Activated naive CD4-positive, alpha-beta T cell treated with anti-CD3 and anti-CD28 coated beads for 36 hours (primary cell): ENCODE measurements at regions of chr10 and their contacts with region 1.

Region 1: GRCh38 chr10:97686962-97687784 is at the start of gene AVPI1:
- DNase-seq: peak; percentile 96
- H3K4me3 Mint-ChIP-seq: peak within 1 kb of the TSS; percentile 81
- H3K27ac Mint-ChIP-seq: no peak within 1 kb of the TSS
- H3K4me1 Mint-ChIP-seq: peaks cover 12% of the 10 kb centered on the region
- H3K27me3 Mint-ChIP-seq: no peaks in the 10 kb centered on the region
- total RNA-seq, gene AVPI1: 1.5 to 1.9 TPM

Region 2: GRCh38 chr10:97640174-97640867 is 46.9 kb before region 1 on chr10 and contains the start of gene PI4K2A:
- CTCF ChIA-PET with region 1: interaction called, 4 read pairs
- intact Hi-C with region 1: loop called (anchors 1 kb)
- DNase-seq: peak; percentile 100
- H3K4me3 Mint-ChIP-seq: peak within 1 kb of the TSS; percentile 93
- H3K27ac Mint-ChIP-seq: peak within 1 kb of the TSS; percentile 73
- H3K4me1 Mint-ChIP-seq: peaks cover 18% of the 10 kb centered on the region
- H3K27me3 Mint-ChIP-seq: no peaks in the 10 kb centered on the region
- total RNA-seq, gene PI4K2A: 8.9 to 9.4 TPM

Region 3: DNA sequence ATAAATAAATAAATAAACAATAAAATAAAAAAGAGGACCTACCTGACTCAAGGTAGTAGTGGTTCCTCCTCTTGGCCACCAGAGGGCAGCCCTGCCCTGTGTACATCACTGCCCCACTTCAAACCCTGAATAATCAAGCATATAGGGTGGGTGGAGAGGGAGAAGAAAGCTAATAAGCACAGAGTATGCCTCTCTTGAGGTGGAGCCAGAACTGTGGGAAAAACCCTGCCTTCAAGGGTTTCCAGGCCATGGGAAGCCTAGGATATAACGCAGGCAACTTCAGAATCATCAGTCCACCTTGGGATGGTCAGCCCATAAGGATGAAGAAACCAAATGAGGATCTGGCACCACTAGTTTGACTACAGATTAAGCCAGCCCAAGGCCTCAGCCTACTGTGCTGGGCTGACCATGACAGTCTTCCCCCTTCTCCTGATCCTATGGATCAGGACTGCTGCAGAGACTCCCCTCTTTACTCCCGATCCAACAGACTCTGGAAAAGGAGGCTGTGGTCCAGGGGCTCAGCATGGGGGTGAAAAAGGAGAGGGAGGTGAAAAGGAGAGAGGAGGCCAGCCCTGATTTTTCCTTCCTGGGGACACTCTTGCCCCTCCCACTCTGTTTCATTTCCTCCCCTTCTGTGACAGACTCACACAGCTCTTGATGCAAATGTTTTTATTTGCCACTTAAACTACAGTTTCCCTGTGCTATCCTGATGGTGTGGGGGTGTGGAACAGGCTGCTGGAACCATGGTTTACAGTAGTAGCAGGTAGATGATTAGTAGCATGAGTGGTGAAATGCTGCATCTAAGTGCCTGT is 10.2 kb before region 1 on chr10:
- CTCF ChIA-PET with region 1: interaction called, 45 read pairs
- intact Hi-C with region 1: loop called (anchors 1 kb)
- DNase-seq: peak; percentile 48
- H3K4me3 Mint-ChIP-seq: no peak overlapping the region
- H3K27ac Mint-ChIP-seq: no peak overlapping the region
- H3K4me1 Mint-ChIP-seq: no peaks in the 10 kb centered on the region
- H3K27me3 Mint-ChIP-seq: no peaks in the 10 kb centered on the region

Region 4: DNA sequence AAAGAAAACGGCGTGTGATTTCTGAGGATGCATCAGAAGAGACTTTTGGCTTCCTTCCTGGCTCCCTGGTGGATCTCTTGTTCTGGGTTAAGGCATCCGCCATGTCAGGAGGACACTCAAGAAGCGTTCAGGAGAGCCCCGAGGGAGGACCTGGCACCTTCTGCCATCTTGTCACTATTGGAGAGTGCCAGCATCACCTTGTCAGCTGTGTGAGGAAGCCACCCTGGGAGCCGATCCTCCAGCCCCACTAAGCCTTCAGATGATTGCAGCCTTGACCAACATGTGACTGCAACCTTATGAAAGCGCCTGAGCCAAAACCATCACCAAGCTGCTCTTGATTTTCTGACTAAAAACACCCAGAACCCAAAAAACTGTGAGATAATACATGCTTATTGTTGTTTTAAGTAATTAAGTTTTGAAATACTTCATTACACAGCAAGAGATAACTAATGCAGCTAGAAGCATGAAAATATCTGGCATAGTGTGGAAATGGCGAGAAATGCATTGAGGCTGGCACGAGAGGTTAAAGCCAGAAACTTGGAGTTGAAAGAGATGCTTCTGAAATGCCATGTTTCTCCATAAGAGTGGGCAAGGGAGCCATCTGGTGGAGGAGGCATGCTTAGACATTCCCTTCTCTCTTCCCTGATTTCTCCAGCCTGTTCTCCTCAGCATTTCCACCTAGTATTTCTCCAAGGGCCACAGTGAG is 44.3 kb after region 1 on chr10:
- CTCF ChIA-PET with region 1: interaction called, 32 read pairs
- intact Hi-C with region 1: no loop called
- DNase-seq: peak; percentile 79
- H3K4me3 Mint-ChIP-seq: no peak overlapping the region
- H3K27ac Mint-ChIP-seq: no peak overlapping the region
- H3K4me1 Mint-ChIP-seq: peaks cover 6% of the 10 kb centered on the region
- H3K27me3 Mint-ChIP-seq: no peaks in the 10 kb centered on the region